PC-9 (cell line): ENCODE measurements at regions of chr5 and their contacts with region 1.

Region 1: GRCh38 chr5:120803282-120803681 is 339.2 kb downstream of the PRR16 start:
- DNase-seq: no peak
- H3K4me3 ChIP-seq: peak overlapping the region; percentile 5; the same call in 1 of the 2 replicates
- H3K27ac ChIP-seq: no peak overlapping the region
- H3K4me1 ChIP-seq: no peaks in the 10 kb centered on the region
- H3K27me3 ChIP-seq: no peaks in the 10 kb centered on the region
- CTCF ChIP-seq: peak; percentile 65

Region 2: DNA sequence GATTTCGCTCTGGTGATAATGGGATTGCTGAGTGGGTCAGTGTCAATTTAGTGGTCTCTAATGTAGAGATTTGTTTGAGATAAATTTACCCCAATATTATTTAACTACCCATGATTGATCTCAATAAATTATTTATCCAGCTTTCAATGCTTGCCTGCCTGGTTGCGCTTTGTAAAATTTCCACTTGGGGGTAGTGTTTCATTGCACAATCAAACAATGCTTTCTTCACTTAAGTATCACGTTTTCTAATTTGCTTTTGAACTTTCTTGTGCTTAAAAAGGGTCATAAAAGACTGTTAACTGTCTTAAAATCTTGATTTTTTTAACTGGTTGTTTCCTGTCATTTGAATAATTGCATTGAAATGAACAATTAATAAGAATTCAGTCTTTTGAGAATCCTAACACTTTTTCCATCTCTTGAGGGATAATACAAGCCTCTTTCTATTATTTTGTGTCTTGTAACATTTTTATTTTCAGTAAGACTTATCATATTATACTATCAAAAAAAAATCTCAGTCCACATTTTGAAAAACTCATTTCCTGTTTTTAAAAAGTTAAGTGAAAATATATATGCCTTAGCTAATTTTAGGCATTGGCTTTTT is 1332.3 kb before region 1 on chr5:
- CTCF ChIA-PET with region 1: no interaction called
- POLR2A ChIA-PET with region 1: no interaction called
- intact Hi-C with region 1: loop called (anchors 10 kb)
- DNase-seq: no peak
- H3K4me3 ChIP-seq: no peak overlapping the region
- H3K27ac ChIP-seq: no peak overlapping the region
- H3K4me1 ChIP-seq: no peaks in the 10 kb centered on the region
- H3K27me3 ChIP-seq: no peaks in the 10 kb centered on the region
- CTCF ChIP-seq: peak; percentile 50

Region 3: GRCh38 chr5:120055858-120056257 is 747.4 kb before region 1 on chr5:
- CTCF ChIA-PET with region 1: no interaction called
- POLR2A ChIA-PET with region 1: no interaction called
- intact Hi-C with region 1: loop called (anchors 5 kb)
- DNase-seq: no peak
- H3K4me3 ChIP-seq: no peak overlapping the region
- H3K27ac ChIP-seq: no peak overlapping the region
- H3K4me1 ChIP-seq: no peaks in the 10 kb centered on the region
- H3K27me3 ChIP-seq: no peaks in the 10 kb centered on the region
- CTCF ChIP-seq: peak; percentile 32; the same call in 1 of the 2 replicates

Region 4: GRCh38 chr5:120463991-120464626 is 339.2 kb before region 1 on chr5 and contains the start of gene PRR16:
- CTCF ChIA-PET with region 1: no interaction called
- POLR2A ChIA-PET with region 1: interaction called, 5 read pairs
- intact Hi-C with region 1: loop called (anchors 2 kb)
- DNase-seq: peak in 1 of 2 experiments; percentile 59
- H3K4me3 ChIP-seq: peak within 1 kb of the TSS; percentile 59
- H3K27ac ChIP-seq: no peak within 1 kb of the TSS
- H3K4me1 ChIP-seq: no peaks in the 10 kb centered on the region; the same call in 1 of the 2 replicates
- H3K27me3 ChIP-seq: peaks cover 12% of the 10 kb centered on the region; the same call in 1 of the 2 replicates
- CTCF ChIP-seq: no peak
- total RNA-seq, gene PRR16: 2.8 and 5.0 TPM in 2 replicates

Region 5: GRCh38 chr5:121399879-121400278 is 596.6 kb after region 1 on chr5:
- CTCF ChIA-PET with region 1: no interaction called
- POLR2A ChIA-PET with region 1: interaction called, 12 read pairs
- intact Hi-C with region 1: no loop called
- DNase-seq: no peak
- H3K4me3 ChIP-seq: no peak overlapping the region
- H3K27ac ChIP-seq: no peak overlapping the region
- H3K4me1 ChIP-seq: no peaks in the 10 kb centered on the region
- H3K27me3 ChIP-seq: no peaks in the 10 kb centered on the region
- CTCF ChIP-seq: no peak

Region 6: DNA sequence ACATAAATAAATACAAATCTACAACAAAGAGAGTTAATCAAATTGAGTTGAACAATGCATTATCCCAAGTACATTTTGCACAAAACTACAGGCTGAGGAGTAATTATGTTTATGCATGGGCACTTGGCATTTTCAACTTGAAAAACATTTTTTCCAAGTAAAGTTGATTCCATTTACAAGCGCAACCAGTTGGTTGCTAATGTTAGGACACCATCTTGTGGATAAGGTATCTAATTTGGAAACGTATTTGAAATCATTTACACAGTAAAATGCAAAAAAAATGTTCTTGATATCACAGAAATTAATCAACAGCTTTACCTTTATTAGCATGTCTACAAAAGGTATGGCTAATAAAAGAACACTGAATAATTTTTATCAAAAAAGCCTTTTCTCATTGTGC is 1067.2 kb after region 1 on chr5:
- CTCF ChIA-PET with region 1: no interaction called
- POLR2A ChIA-PET with region 1: no interaction called
- intact Hi-C with region 1: loop called (anchors 10 kb)
- DNase-seq: peak in 1 of 2 experiments; percentile 35
- H3K4me3 ChIP-seq: no peak overlapping the region
- H3K27ac ChIP-seq: no peak overlapping the region
- H3K4me1 ChIP-seq: 0 out of 2 replicates have a peak, but pooled peaks cover 4% of the 10 kb centered on the region
- H3K27me3 ChIP-seq: no peaks in the 10 kb centered on the region
- CTCF ChIP-seq: peak; percentile 58

Region 7: DNA sequence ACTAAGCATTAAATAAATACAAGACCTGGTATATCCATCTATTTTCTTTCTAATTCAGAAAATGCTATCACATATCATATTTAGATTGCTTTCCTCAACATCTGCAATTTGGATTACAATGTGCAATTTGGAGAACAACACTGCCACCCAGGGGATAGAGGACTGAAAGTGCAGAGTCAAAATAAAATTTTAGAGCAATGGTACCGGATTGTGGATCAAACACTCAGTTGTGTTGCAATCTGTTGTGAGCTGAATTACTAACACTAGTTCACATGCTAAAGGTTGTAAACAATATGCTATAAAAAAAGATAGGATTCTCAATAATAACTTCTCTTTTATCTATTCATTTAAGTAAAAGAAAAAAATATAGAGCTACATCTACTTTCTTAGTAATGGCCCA is 1146.6 kb after region 1 on chr5:
- CTCF ChIA-PET with region 1: no interaction called
- POLR2A ChIA-PET with region 1: no interaction called
- intact Hi-C with region 1: loop called (anchors 10 kb)
- DNase-seq: peak in 1 of 2 experiments; percentile 19
- H3K4me3 ChIP-seq: no peak overlapping the region
- H3K27ac ChIP-seq: no peak overlapping the region
- H3K4me1 ChIP-seq: no peaks in the 10 kb centered on the region
- H3K27me3 ChIP-seq: no peaks in the 10 kb centered on the region
- CTCF ChIP-seq: peak; percentile 82